ENCODE measurements at regions of chr12 and their contacts with region 1.

Region 1: GRCh38 chr12:66130277-66131066 is at the start of gene LLPH:
- DNase-seq: peak; percentile 86
- H3K4me3 Mint-ChIP-seq: peak within 1 kb of the TSS; percentile 98
- H3K27ac Mint-ChIP-seq: peak within 1 kb of the TSS; percentile 93
- H3K4me1 Mint-ChIP-seq: peaks cover 57% of the 10 kb centered on the region
- H3K27me3 Mint-ChIP-seq: no peaks in the 10 kb centered on the region
- total RNA-seq, gene LLPH: 31.3 and 33.6 TPM in 2 replicates

Region 2: GRCh38 chr12:66196806-66197205 is 66.3 kb after region 1 on chr12:
- intact Hi-C with region 1: loop called (anchors 2 kb)
- DNase-seq: no peak
- H3K4me3 Mint-ChIP-seq: peak overlapping the region; percentile 75
- H3K27ac Mint-ChIP-seq: peak overlapping the region; percentile 72
- H3K4me1 Mint-ChIP-seq: peaks cover 27% of the 10 kb centered on the region
- H3K27me3 Mint-ChIP-seq: peaks cover 2% of the 10 kb centered on the region

Region 3: GRCh38 chr12:66235626-66236281 is 105.3 kb after region 1 on chr12:
- intact Hi-C with region 1: loop called (anchors 2 kb)
- DNase-seq: no peak
- H3K4me3 Mint-ChIP-seq: peak overlapping the region; percentile 59
- H3K27ac Mint-ChIP-seq: no peak overlapping the region
- H3K4me1 Mint-ChIP-seq: peaks cover 11% of the 10 kb centered on the region
- H3K27me3 Mint-ChIP-seq: peaks cover 17% of the 10 kb centered on the region

Region 4: GRCh38 chr12:66269757-66270383 is 139.4 kb after region 1 on chr12:
- intact Hi-C with region 1: no loop called
- DNase-seq: peak; percentile 8
- H3K4me3 Mint-ChIP-seq: no peak overlapping the region
- H3K27ac Mint-ChIP-seq: no peak overlapping the region
- H3K4me1 Mint-ChIP-seq: peaks cover 3% of the 10 kb centered on the region
- H3K27me3 Mint-ChIP-seq: no peaks in the 10 kb centered on the region

Region 5: DNA sequence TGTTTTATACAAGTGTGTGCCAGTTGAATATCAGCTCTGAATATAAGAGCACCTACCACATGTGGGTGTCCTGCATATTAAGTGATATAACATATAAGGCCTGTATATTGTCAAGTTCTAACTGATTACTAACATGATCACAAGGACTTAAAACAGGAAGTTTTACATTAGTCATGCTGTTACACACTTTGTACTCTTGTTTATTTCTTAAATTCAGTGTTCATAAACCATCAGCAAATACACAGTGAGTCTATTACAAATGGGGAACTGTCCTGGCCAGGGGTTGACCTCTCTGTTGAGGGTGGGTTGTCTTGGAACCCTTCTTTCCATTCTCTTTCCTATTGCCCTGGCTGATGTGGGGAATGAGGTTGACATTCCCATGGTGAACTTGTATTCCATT is 191.0 kb after region 1 on chr12:
- intact Hi-C with region 1: no loop called
- DNase-seq: no peak
- H3K4me3 Mint-ChIP-seq: no peak overlapping the region
- H3K27ac Mint-ChIP-seq: no peak overlapping the region
- H3K4me1 Mint-ChIP-seq: peaks cover 25% of the 10 kb centered on the region
- H3K27me3 Mint-ChIP-seq: no peaks in the 10 kb centered on the region